Endothelial cell of umbilical vein (primary cell): ENCODE measurements at regions of chr17 and their contacts with region 1.

Region 1: GRCh38 chr17:36937966-36938565 is 791 bp downstream of the LHX1 start:
- DNase-seq: peak; percentile 33
- H3K4me3 ChIP-seq: no peak overlapping the region
- H3K27ac ChIP-seq: no peak overlapping the region
- H3K4me1 ChIP-seq: peaks cover 12% of the 10 kb centered on the region
- H3K27me3 ChIP-seq: peaks cover 94 to 100% of the 10 kb centered on the region in 2 experiments
- CTCF ChIP-seq: no peak
- POLR2A ChIP-seq: no peak

Region 2: DNA sequence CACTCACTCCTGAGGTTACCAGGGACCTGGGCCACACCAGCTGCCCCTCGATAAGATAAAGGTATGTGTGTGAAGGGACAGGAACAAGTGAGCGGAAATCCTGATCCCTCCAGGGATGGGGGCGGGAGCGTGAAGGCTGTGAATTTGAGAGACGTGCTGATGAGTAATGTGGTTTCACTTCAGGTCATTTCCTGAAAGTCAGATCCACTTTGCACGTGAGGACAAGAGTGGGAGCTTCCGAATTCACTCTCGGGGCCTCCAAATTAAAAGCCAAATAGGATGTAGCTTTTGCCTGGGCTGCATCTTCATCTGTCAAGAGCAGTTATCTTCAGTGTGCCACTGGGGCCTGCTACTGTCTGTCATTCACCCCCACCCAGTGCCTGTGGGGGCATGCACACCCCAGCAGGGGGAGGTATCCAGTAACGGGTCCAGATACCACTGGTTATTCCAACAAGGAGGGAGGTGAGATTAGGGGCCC is 88.2 kb before region 1 on chr17:
- CTCF ChIA-PET with region 1: no interaction called
- POLR2A ChIA-PET with region 1: no interaction called
- dilution Hi-C with region 1: no loop called
- intact Hi-C with region 1: loop called (anchors 5 kb)
- DNase-seq: peak; percentile 59
- H3K4me3 ChIP-seq: no peak overlapping the region
- H3K27ac ChIP-seq: peak overlapping the region; percentile 97
- H3K4me1 ChIP-seq: peaks cover 46% of the 10 kb centered on the region
- H3K27me3 ChIP-seq: no peaks in the 10 kb centered on the region
- CTCF ChIP-seq: peak in 1 of 2 donors; percentile 33
- POLR2A ChIP-seq: no peak

Region 3: DNA sequence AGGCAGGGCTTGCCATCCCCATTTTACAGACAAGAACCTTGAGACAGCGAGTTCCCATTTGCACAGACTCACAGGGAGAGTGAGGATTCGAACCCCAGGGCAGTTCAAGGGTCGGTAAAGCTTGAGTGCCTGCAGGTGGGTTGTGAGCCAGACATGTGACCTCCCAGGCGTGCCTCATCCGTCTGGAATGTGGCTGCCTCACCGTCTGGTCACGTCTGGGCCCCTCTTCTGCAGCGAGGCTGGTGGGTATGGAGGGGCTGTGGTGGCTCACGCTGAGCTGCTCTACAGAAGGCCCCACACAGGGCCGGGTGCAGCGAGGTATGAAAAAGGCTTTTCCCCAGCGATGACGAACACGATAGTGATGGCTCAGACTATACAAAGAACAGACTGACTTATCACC is 36.6 kb before region 1 on chr17:
- CTCF ChIA-PET with region 1: no interaction called
- POLR2A ChIA-PET with region 1: no interaction called
- dilution Hi-C with region 1: no loop called
- intact Hi-C with region 1: no loop called
- DNase-seq: no peak
- H3K4me3 ChIP-seq: no peak overlapping the region
- H3K27ac ChIP-seq: no peak overlapping the region
- H3K4me1 ChIP-seq: no peaks in the 10 kb centered on the region
- H3K27me3 ChIP-seq: peaks cover 2 to 9% of the 10 kb centered on the region in 2 experiments
- CTCF ChIP-seq: no peak
- POLR2A ChIP-seq: no peak

Region 4: GRCh38 chr17:36921095-36921851 is 16.8 kb before region 1 on chr17:
- CTCF ChIA-PET with region 1: no interaction called
- POLR2A ChIA-PET with region 1: no interaction called
- dilution Hi-C with region 1: no loop called
- intact Hi-C with region 1: loop called (anchors 1 kb)
- DNase-seq: no peak
- H3K4me3 ChIP-seq: no peak overlapping the region
- H3K27ac ChIP-seq: no peak overlapping the region
- H3K4me1 ChIP-seq: no peaks in the 10 kb centered on the region
- H3K27me3 ChIP-seq: peaks cover 29 to 51% of the 10 kb centered on the region in 2 experiments
- CTCF ChIP-seq: no peak
- POLR2A ChIP-seq: no peak